Mammary epithelial cell (primary cell): ENCODE measurements at regions of chr3 and their contacts with region 1.

Region 1: DNA sequence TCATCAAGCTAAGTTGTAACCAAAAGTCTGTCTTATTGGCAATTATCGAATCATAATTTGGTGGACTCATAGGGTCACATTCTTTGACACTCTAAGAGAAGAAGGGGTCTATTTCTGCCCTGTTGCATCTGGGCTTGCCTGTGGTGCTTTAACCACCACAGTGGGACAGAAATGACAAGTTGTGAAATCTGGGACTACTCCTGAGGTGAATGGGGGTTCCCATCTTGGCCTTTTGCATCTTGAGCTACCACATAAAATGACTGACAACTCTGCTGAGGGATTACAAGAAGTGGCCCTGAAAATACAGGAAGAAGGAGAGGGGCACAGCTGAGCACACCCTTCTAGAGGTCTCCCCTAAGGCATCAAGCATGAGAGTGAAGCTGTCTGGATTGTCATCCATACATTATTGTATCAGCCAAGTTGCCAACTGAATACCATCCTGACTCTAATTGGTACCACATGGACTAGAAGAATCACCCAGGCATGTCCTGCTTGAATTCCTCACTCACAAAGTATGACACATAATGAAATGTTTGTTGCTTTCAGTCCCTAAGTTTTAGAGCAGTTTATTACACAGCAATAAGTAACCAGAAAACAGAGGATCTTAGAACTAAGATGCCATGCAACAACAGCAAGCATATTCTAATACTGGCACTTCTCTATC is 306.5 kb downstream of the ROBO1 start:
- DNase-seq: no peak
- H3K4me3 ChIP-seq: no peak overlapping the region
- H3K27ac ChIP-seq: no peak overlapping the region
- H3K4me1 ChIP-seq: no peaks in the 10 kb centered on the region
- H3K27me3 ChIP-seq: peaks cover 2% of the 10 kb centered on the region
- CTCF ChIP-seq: no peak

Region 2: DNA sequence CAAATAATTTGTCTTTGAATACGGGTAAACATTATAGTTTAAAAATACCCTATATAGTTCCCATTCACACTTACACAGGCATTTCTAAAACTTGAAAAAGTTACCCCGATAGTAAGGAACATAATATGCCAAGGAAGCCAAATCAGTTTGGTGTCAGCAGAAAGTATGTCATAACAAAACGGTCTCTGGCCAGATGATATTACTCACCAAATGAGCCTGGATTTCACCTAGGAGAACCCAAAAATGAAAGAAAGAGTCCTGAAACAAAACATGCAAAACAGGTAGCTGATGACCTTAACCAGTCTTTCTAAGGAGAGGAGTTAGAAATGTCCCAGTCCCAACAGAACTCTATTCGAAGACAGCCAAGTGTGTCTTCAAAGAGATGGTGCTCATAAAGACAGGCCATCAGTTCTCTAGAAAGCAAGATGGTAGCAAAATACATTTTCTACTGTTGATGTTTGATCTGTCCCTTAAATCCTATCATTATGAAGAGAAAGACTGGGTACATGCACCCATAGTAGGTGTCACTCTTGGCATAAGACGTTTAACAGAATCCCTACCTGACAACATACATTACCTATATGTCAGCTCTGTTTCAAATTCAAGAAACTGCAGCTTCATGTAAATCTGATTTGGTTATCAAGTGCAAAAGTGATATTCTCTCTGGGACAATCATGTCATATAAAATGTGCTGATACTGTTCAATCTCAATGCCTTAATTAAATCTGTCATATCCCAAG is 636.0 kb before region 1 on chr3:
- CTCF ChIA-PET with region 1: no interaction called
- dilution Hi-C with region 1: no loop called
- in situ Hi-C with region 1: no loop called
- intact Hi-C with region 1: no loop called
- DNase-seq: no peak
- H3K4me3 ChIP-seq: no peak overlapping the region
- H3K27ac ChIP-seq: no peak overlapping the region
- H3K4me1 ChIP-seq: peaks cover 7% of the 10 kb centered on the region
- H3K27me3 ChIP-seq: no peaks in the 10 kb centered on the region
- CTCF ChIP-seq: no peak

Region 3: DNA sequence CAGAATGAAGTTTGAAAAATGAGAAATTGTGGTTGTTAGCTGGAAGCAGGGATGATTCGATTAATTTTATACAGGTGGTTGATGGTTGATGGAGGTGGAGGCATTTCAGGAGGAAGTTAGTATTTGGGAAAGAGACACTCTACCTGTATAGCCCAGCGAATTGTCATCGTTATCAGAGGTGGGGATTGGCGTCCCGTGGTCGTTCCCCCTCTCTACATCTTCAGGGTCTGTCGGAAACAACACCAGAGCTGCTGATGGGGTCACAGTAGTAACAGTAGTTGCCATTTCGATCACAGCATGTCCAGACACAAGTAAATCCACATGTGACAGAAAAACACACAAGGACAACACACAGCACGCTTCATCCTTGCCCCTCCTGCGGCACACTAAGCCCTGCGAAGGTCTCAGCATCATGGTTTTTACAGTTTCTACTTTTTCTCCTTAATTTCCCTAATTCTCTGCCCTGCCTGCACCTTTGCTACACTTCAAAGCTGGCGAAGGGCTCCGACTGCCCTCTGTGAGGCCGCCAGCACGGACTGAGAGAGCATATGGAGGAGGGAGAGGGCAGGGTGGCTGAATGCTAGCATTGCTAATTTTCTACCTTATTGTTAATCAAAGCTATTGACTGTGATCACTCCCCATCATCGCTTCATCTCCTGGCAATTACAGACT is 335.8 kb before region 1 on chr3:
- CTCF ChIA-PET with region 1: no interaction called
- dilution Hi-C with region 1: no loop called
- in situ Hi-C with region 1: no loop called
- intact Hi-C with region 1: no loop called
- DNase-seq: no peak
- H3K4me3 ChIP-seq: no peak overlapping the region
- H3K27ac ChIP-seq: no peak overlapping the region
- H3K4me1 ChIP-seq: no peaks in the 10 kb centered on the region
- H3K27me3 ChIP-seq: no peaks in the 10 kb centered on the region
- CTCF ChIP-seq: no peak

Region 4: DNA sequence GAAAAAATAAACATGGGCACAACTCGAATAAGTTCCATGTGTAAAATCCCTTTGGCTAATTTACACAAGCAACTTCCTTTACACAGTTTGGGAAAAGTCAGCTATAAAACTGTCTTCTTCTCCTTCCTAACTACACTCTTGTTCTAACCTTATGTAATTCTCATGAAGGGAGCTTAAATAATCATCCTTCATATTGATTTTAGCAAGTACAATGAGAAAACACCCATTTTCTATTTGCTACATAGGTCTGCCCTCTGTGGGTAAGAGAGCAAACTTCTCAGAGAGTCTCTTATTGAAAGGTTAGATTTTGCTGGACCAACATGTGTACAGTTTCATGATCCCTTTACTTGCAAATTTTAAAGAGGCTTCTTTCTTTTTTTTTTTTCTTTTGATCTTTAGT is 92.0 kb before region 1 on chr3:
- CTCF ChIA-PET with region 1: no interaction called
- dilution Hi-C with region 1: loop called (anchors 5 kb)
- in situ Hi-C with region 1: no loop called
- intact Hi-C with region 1: no loop called
- DNase-seq: no peak
- H3K4me3 ChIP-seq: no peak overlapping the region
- H3K27ac ChIP-seq: no peak overlapping the region
- H3K4me1 ChIP-seq: peaks cover 24% of the 10 kb centered on the region
- H3K27me3 ChIP-seq: no peaks in the 10 kb centered on the region
- CTCF ChIP-seq: peak; percentile 10 to 32

Region 5: DNA sequence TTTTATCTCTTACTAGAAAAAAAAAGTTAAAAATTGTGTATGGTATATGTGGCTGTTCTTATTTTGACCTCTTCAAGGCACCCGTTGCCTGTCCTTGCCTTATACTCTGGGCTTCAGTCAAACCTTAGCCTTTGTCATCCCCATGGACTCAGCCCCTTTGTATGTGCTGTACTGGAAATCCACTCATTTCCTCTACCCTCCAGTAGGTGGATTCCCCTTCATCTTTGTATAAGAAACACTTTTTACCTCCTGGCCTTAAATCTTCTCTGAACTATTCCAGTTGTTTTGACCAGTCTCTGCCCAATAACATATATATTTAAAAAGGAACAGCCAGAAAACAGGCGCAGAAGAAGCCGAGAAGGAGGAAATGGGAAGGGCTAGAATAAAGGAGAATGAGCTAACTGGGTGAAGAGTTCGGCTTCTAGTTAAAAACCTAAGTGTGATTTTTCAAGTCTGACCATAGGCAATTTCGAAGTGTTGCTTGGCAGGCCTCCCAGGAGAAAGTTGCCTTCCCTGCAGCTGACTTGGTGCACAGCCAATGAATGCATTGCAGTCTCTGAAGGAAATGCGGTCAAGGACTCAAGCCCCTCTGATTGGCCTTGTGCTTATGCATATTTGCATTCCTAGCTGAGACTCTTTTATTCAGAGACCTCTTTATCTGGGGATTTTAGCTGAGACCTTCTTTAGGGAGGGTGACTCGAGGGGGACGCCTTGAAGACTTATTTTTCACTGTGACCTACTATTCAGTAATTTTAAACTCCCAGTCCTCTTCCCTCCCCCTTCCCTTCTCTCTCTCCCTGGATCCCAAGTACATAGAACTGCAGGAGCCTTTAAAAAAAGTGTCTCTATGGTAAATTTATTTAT is 29.1 kb after region 1 on chr3:
- CTCF ChIA-PET with region 1: no interaction called
- dilution Hi-C with region 1: no loop called
- in situ Hi-C with region 1: no loop called
- intact Hi-C with region 1: no loop called
- DNase-seq: peak; percentile 20
- H3K4me3 ChIP-seq: no peak overlapping the region
- H3K27ac ChIP-seq: no peak overlapping the region
- H3K4me1 ChIP-seq: no peaks in the 10 kb centered on the region
- H3K27me3 ChIP-seq: no peaks in the 10 kb centered on the region
- CTCF ChIP-seq: peak; percentile 4 to 10